ENCODE measurements at regions of chr6 and their contacts with region 1.

Region 1: GRCh38 chr6:152151920-152152319 is 344.4 kb downstream of the ESR1 start:
- DNase-seq: no peak
- ATAC-seq: no peak
- H3K4me3 ChIP-seq: no peak overlapping the region
- H3K27ac ChIP-seq: no peak overlapping the region
- H3K4me1 ChIP-seq: peaks cover 0 to 14% (median 7%) of the 10 kb centered on the region in 9 donors
- H3K27me3 ChIP-seq: no peaks in the 10 kb centered on the region
- CTCF ChIP-seq: no peak

Region 2: DNA sequence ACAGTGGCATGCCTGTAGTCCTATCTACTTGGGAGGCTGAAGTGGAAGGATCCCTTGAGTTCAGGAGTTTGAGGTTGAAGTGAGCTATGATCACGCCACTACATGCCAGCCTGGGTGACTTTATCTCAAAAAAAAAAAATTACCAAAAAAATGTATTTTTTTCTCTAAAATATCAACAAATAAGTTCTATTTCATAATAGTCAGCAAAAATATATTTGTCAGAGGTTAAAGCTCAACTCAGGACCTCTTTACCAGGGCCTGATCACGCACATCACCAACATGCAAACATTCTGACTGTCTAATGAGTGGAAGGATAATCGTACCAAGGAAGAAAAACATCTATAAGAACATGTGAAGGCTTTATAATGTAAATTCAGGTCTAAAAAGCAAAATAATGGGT is 98.2 kb after region 1 on chr6:
- intact Hi-C with region 1: loop called in 1 of 10 experiments (anchors 10 kb)
- DNase-seq: no peak
- ATAC-seq: no peak
- H3K4me3 ChIP-seq: no peak overlapping the region
- H3K27ac ChIP-seq: no peak overlapping the region
- H3K4me1 ChIP-seq: peaks cover 2 to 42% (median 35%) of the 10 kb centered on the region in 9 donors
- H3K27me3 ChIP-seq: no peaks in the 10 kb centered on the region
- CTCF ChIP-seq: no peak

Measured in heart right ventricle (tissue), 16 donors.